ENCODE measurements at regions of chr5 and their contacts with region 1.

Region 1: DNA sequence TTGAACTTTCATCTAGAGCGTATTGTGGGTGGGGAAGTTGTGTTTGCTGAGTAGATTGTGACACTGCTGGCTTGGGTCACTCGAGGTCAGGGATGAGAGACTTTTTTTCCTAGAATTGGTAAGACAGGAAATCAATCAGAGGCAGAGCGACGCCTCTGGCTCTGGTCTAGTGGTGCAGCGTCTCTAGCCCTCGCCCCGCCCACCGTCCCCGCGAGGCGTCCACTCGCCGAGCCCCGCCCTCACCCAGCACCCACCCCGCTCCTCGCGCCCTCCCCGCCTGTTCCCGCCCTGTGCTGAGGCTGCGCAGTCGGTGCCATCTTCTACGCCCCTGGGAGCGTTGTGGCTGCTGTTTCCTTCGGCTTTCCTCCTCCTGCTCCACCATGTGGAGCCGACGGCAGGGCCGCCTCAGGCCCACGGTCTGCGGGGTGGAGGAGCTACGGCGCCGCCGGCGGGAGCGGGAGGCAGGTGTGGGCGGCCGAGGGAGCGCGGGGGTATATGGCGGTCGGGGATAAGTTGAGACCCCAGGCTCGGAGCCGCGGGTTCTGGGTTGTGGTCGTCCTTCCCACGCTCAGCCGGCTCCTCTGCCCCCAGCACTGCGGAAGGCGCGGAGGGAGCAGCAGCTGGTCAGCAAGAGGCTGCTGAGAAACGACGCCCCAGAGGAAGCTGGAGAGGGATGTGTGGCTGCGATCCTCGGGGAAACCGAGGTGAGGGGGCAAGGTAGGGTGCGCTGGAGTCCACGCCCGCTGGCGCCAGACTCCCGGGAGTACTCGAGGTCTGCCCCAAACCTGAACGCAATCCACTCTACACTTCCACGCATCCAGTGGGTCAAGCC is at the start of gene TMCO6:
- DNase-seq: peak; percentile 98 to 99
- ATAC-seq: peak; percentile 95
- total RNA-seq, gene TMCO6: 11.4 to 16.1 TPM

Region 2: GRCh38 chr5:140401362-140402257 is 237.8 kb before region 1 on chr5 and contains the start of gene ANKHD1:
- intact Hi-C with region 1: loop called in 1 of 2 experiments (anchors 5 kb)
- DNase-seq: peak; percentile 96 to 99
- ATAC-seq: peak; percentile 81
- total RNA-seq, gene ANKHD1: 118 to 140 TPM

Region 3: DNA sequence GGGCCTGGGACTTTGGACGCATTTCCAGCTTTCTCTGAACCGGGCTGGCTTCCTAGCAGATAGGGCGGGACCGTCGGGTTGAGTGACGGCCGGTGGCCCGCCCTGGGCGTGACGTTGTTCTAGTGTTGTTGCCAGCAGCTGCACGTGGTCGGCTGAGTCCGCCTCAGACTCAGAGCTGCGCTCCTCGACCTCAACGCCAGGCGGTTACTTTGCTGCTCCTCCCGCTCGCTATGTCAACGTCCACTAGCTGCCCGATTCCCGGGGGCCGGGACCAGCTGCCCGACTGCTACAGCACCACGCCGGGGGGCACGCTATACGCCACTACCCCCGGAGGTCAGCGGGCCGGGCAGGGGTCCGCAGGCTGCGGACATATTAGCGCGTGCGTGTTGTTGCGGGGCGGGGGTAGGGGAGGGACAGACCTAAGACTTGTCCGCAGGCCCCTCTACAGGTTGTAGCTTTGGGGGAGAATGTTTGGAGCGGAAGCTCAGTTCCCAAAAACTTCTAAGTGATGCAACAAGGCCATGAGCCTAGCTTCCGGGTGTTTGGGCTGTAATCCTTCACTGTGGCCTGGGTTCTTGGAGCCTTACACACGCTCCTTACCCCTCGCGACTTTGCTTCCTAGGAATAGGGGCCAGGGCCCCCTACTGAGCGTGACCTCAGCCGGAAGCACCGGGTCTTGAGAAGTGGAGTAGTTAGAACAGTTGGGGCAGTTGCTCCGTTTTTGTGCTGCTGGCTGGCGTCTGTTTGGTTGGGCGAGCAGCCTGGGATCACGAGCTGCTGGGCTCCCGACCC is 91.7 kb before region 1 on chr5 and contains the start of gene EIF4EBP3:
- intact Hi-C with region 1: loop called in 1 of 2 experiments (anchors 5 kb)
- DNase-seq: peak; percentile 98
- ATAC-seq: peak; percentile 84
- total RNA-seq, gene EIF4EBP3: 27.2 to 32.9 TPM

Region 4: DNA sequence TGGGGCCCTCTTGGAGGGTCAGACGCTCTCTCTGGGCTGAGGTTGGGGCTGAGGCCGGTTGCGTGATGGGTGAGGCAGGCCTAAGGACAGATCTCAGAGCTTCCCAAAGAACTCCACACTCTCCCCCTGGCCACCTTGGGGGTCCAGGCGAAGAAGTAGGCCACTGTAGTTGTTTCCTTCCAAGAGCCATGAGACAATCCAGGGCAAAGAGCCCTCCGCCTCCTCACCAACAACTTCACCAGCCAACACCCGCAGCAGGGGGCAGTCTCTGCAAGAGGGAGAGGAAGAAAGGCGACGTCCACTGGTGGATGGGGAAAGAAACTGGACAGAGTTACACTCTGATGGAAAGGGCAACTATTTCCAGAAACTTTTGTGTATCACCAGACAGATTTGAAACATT is 64.1 kb before region 1 on chr5:
- intact Hi-C with region 1: loop called (anchors 10 kb)
- DNase-seq: peak; percentile 67 to 76
- ATAC-seq: peak; percentile 89

Measured in left colon (tissue), 2 donors.